HepG2 (cell line): ENCODE measurements at regions of chr11 and their contacts with region 1.

Region 1: DNA sequence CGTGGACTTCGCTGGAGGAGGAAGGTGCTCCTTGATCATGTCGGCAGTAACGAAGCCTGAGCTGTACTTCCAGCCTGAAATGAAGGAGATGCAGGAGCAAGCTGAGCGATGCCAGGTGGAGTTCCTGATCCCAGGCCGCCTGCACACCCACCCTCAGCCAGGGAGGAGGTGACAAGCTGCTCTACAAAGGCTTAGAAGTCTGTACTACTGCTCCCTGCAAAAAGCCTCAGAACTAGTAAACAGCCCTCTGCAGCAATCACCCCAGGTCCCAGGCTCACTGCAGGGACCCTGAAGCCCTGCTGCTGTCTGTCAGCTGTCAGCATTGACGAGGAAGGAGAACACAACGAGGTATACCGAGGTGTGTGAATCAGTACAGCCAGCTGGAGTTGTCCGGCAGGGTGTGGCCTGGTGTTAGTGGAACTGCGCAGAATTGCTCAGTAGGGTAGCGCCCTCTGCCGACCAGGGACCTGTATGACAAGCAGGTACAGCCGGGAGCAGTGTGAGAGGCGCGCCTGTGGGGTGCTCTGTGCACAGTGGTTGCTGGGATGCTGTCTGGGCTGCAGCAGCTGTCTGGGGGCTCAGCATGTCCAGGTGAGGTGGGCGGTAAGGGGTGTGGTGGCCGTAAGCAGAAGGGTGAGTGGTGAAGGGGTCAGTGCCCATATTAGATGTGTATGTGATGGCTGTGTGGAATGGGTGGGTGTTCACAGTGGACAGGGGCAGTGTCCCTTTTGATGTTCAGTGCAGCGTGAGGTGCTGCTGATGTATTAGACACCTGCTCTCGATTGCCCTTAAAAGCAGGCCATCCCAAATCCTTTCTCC is 7.6 kb downstream of the CYB5R2 start:
- DNase-seq: peak; percentile 65
- ATAC-seq: peak; percentile 98
- H3K4me3 ChIP-seq: no peak overlapping the region
- H3K27ac ChIP-seq: no peak overlapping the region
- H3K4me1 ChIP-seq: 0 out of 2 replicates have a peak, but pooled peaks cover 8% of the 10 kb centered on the region
- H3K27me3 ChIP-seq: no peaks in the 10 kb centered on the region
- CTCF ChIP-seq: peak; percentile 98
- EP300 ChIP-seq: no peak
- POLR2A ChIP-seq: no peak
- RAD21 ChIP-seq: peak; percentile 93

Region 2: DNA sequence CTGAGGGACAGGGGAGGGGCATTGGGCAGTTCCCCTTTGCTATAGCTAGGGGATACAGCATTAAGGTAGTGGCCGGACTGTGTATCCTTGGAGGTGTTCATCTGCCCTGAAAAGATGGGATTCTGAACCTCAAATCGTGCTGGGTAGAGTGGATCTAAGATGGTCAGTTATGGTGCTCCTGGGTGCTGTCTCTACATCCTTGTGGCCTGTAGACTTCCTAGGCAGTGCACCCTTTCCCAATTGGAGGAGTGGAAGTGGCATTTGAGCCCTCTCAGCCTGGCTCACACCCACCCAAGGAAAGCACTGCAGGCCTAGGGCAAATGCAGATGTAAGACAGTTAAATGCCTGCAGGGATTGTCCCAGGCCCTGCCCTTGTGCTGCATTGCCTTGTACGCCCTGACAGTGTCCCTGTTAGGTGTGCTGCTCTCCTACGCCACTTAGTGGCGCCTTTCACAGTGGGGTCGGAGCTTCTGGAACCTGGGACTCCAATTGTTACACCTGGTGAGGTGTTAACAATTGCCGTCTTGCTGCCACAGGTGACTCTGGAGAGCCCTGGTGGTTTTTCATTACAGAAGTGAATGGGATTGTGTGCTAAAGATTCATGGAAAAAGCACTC is 116.9 kb before region 1 on chr11:
- CTCF ChIA-PET with region 1: interaction called, 9 read pairs
- POLR2A ChIA-PET with region 1: no interaction called
- in situ Hi-C with region 1: no loop called
- intact Hi-C with region 1: loop called (anchors 1 kb)
- DNase-seq: peak; percentile 25
- ATAC-seq: peak; percentile 99
- H3K4me3 ChIP-seq: no peak overlapping the region
- H3K27ac ChIP-seq: no peak overlapping the region
- H3K4me1 ChIP-seq: no peaks in the 10 kb centered on the region
- H3K27me3 ChIP-seq: no peaks in the 10 kb centered on the region; a peak in 1 of 5 replicates
- CTCF ChIP-seq: peak; percentile 83
- EP300 ChIP-seq: no peak
- POLR2A ChIP-seq: no peak
- RAD21 ChIP-seq: peak; percentile 71

Region 3: GRCh38 chr11:7651140-7651551 is 14.5 kb before region 1 on chr11:
- CTCF ChIA-PET with region 1: no interaction called
- POLR2A ChIA-PET with region 1: no interaction called
- in situ Hi-C with region 1: no loop called
- intact Hi-C with region 1: no loop called
- DNase-seq: no peak
- ATAC-seq: no peak
- H3K4me3 ChIP-seq: no peak overlapping the region
- H3K27ac ChIP-seq: no peak overlapping the region
- H3K4me1 ChIP-seq: peaks cover 18% of the 10 kb centered on the region
- H3K27me3 ChIP-seq: no peaks in the 10 kb centered on the region
- CTCF ChIP-seq: no peak
- EP300 ChIP-seq: no peak
- POLR2A ChIP-seq: no peak
- RAD21 ChIP-seq: no peak

Region 4: GRCh38 chr11:7874061-7874460 is 208.4 kb after region 1 on chr11:
- CTCF ChIA-PET with region 1: no interaction called
- POLR2A ChIA-PET with region 1: no interaction called
- in situ Hi-C with region 1: no loop called
- intact Hi-C with region 1: no loop called
- DNase-seq: no peak
- ATAC-seq: no peak
- H3K4me3 ChIP-seq: no peak overlapping the region
- H3K27ac ChIP-seq: no peak overlapping the region
- H3K4me1 ChIP-seq: no peaks in the 10 kb centered on the region
- H3K27me3 ChIP-seq: no peaks in the 10 kb centered on the region
- CTCF ChIP-seq: no peak
- EP300 ChIP-seq: no peak
- POLR2A ChIP-seq: no peak
- RAD21 ChIP-seq: no peak